H1 (cell line): ENCODE measurements at regions of chr14 and their contacts with region 1.

Region 1: DNA sequence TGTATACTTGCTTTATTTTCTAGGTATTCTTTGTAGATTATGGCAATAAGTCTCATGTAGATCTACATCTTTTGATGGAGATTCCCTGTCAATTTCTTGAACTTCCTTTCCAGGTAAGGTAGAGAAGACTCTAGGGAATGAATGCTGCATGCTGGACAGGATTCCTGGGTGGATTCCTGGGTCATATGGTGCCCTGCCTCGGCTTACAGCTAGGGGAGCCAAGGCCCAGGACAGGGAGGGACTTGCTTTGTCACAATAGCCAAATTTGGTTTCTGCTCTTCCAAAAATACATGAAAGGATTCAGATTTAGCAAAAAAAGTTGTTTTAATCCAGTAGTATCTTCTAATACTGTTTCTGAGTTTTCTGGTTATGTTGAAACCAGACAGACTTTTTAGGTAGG is 59.5 kb upstream of the ASPG start:
- DNase-seq: no peak
- H3K4me3 ChIP-seq: no peak overlapping the region
- H3K27ac ChIP-seq: no peak overlapping the region
- H3K4me1 ChIP-seq: no peaks in the 10 kb centered on the region
- H3K27me3 ChIP-seq: no peaks in the 10 kb centered on the region
- CTCF ChIP-seq: peak; percentile 23 to 55 (median 53); a peak in 3 of 4 replicates
- EP300 ChIP-seq: no peak
- POLR2A ChIP-seq: no peak
- RAD21 ChIP-seq: no peak; a peak in 1 of 4 replicates

Region 2: DNA sequence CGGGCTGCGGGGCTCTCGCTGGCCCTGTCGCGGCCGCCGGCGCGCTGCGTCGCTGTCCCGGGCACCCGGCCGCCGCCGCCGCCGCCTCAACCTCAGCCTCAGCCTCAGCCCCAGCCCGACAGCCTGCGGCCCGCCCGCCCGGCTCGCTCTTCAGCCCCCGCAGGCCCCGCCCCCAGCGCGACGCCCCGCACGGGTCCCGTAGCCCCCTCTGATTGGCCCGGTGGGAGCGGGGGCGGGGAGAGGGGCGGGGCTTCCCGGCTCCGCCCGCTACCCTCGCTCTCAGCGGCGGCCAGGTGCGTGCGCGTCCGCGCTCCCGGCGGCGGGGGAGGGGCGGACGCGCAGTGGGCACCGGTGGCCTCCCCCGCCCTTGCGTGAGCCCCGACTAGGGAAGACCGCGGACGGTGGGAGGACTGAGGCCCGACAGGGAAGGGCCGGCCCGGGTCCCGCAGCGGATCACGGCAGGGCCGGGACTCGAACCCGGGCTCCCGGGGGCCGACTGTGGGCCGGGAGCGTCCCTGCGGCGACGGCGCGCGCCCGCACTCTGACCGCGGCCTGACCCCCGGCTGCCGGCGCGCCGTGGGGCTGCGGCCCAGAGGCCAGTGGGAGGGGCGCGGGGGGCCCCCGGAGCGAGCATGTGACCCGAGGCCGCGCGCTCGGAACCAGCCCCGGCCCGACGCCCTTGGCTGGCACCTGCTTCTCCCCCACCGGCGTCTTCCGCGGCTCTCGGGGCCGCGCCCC is 178.4 kb before region 1 on chr14 and contains the start of gene PPP1R13B:
- CTCF ChIA-PET with region 1: no interaction called
- POLR2A ChIA-PET with region 1: no interaction called
- DNase-seq: peak in 1 of 2 experiments; percentile 94
- H3K4me3 ChIP-seq: peak within 1 kb of the TSS; percentile 66 to 82 (median 74)
- H3K27ac ChIP-seq: no peak within 1 kb of the TSS; the same call in 1 of the 2 replicates
- H3K4me1 ChIP-seq: peaks cover 0 to 7% (median 2%) of the 10 kb centered on the region in 4 experiments; a peak in 6 of 7 replicates
- H3K27me3 ChIP-seq: peaks cover 0 to 26% (median 20%) of the 10 kb centered on the region in 4 experiments; a peak in 6 of 7 replicates
- CTCF ChIP-seq: no peak
- EP300 ChIP-seq: 0 out of 3 replicates have a peak, but pooled peaks of 1 of the 2 experiments have one; percentile 4
- POLR2A ChIP-seq: no peak
- RAD21 ChIP-seq: no peak
- total RNA-seq, gene PPP1R13B: 8.9 and 9.7 TPM in 2 replicates

Region 3: GRCh38 chr14:104009297-104009696 is 16.7 kb before region 1 on chr14:
- CTCF ChIA-PET with region 1: interaction called, 20 read pairs
- POLR2A ChIA-PET with region 1: no interaction called
- DNase-seq: no peak
- H3K4me3 ChIP-seq: no peak overlapping the region
- H3K27ac ChIP-seq: no peak overlapping the region
- H3K4me1 ChIP-seq: no peaks in the 10 kb centered on the region
- H3K27me3 ChIP-seq: no peaks in the 10 kb centered on the region
- CTCF ChIP-seq: no peak
- EP300 ChIP-seq: no peak
- POLR2A ChIP-seq: no peak
- RAD21 ChIP-seq: no peak

Region 4: GRCh38 chr14:104069541-104069940 is 43.5 kb after region 1 on chr14:
- CTCF ChIA-PET with region 1: no interaction called
- POLR2A ChIA-PET with region 1: no interaction called
- DNase-seq: no peak
- H3K4me3 ChIP-seq: no peak overlapping the region
- H3K27ac ChIP-seq: no peak overlapping the region
- H3K4me1 ChIP-seq: no peaks in the 10 kb centered on the region
- H3K27me3 ChIP-seq: no peaks in the 10 kb centered on the region
- CTCF ChIP-seq: no peak
- EP300 ChIP-seq: no peak
- POLR2A ChIP-seq: no peak
- RAD21 ChIP-seq: no peak